ENCODE measurements at regions of chr17 and their contacts with region 1.

Region 1: DNA sequence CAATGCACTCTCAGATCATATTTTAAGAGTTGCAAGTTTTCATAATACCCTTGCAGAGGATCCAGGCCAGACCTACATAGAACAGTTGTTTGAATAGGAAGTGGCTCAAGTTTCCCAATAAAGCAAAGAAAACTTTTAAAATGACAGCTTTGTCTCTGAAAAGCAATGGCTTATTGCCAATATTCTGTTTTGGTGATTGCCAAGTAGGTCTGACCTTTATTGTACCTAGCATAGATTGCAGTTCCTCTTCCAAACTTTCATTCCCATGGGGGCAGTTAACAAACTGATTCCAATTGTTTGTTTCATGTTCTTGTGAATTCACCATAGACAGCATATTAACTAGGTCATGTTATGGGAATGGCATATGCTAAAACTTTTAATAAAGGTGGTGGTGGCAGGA is 664.6 kb upstream of the CA10 start:
- DNase-seq: no peak
- H3K4me3 ChIP-seq: no peak overlapping the region
- H3K4me1 ChIP-seq: no peaks in the 10 kb centered on the region
- H3K27me3 ChIP-seq: no peaks in the 10 kb centered on the region

Region 2: DNA sequence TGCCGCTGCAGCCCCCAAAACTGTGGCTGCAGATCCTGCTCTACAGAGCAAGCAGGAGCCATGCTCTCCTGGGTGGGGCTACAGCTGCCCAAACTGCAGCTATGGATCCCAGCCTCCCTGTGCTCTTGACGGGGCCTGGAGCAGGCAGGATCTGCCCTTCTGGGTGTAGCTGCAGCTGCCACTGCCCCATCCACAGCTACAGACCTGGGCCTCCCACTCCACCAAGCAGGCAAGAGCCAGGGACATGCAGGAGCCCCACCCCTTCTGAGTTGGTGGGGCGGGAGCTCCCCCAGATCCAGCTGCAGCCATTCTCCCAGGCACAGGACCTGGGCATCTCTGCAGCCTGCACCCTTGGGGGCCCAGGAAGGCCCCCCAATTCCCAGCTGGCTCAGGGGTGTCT is 113.4 kb before region 1 on chr17:
- in situ Hi-C with region 1: loop called (anchors 25 kb)
- DNase-seq: no peak
- H3K4me3 ChIP-seq: no peak overlapping the region
- H3K4me1 ChIP-seq: no peaks in the 10 kb centered on the region
- H3K27me3 ChIP-seq: no peaks in the 10 kb centered on the region

Region 3: GRCh38 chr17:52965856-52966255 is 142.7 kb after region 1 on chr17:
- in situ Hi-C with region 1: no loop called
- DNase-seq: no peak
- H3K4me3 ChIP-seq: no peak overlapping the region
- H3K4me1 ChIP-seq: no peaks in the 10 kb centered on the region
- H3K27me3 ChIP-seq: no peaks in the 10 kb centered on the region

Measured in HAP-1 (cell line).